Sciatic nerve (tissue), 2 donors: ENCODE measurements at regions of chr1 and their contacts with region 1.

Region 1: GRCh38 chr1:162736633-162737067 is 53.9 kb upstream of the HSD17B7 start:
- DNase-seq: no peak
- ATAC-seq: no peak

Region 2: GRCh38 chr1:162444903-162445302 is 291.7 kb before region 1 on chr1:
- intact Hi-C with region 1: loop called (anchors 5 kb)
- DNase-seq: no peak
- ATAC-seq: no peak